Right ventricle myocardium inferior (tissue), 1 donor: ENCODE measurements at regions of chr1 and their contacts with region 1.

Region 1: GRCh38 chr1:87328272-87329050 is at the start of gene LMO4:
- DNase-seq: peak; percentile 97
- ATAC-seq: peak; percentile 91
- total RNA-seq, gene LMO4: 44.3 TPM

Region 2: DNA sequence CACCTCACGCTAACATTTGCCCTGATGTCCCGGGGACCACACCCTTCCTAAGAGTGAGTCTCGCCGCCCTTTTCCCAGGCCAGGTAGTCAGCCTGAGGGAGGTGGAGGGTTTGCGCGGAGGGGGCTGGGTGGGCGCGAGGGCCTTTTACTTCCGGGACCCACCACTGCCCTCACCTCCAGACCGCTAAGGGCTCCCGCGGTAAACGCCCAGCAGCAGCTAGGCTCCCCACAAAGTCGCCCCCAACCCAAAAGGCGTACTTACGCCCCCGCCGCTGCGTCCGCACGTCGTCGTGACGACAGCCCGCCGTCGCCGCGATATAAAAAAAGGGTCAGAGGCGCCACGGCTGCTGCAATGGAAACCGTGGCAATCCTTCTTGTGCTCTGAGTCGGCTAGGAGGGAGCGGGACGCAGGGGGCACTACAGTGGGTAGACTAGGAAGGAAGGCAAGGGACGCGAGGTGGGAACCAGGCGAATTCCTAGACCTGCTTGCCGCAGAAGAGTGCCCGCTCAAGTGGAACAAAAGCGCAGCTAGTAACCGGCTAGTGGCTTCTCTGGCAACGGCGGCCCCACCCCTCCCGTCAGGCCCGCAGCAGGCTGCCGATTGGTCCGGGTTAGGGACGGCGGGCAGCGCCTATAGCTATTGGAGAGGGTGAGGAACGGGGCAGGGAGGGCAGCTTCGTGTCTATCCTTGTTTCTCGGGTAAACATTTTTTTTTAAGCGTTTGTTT is 932.5 kb before region 1 on chr1 and contains the start of gene ODF2L:
- intact Hi-C with region 1: loop called (anchors 10 kb)
- DNase-seq: peak; percentile 96
- ATAC-seq: peak; percentile 100
- total RNA-seq, gene ODF2L: 5.1 TPM

Region 3: DNA sequence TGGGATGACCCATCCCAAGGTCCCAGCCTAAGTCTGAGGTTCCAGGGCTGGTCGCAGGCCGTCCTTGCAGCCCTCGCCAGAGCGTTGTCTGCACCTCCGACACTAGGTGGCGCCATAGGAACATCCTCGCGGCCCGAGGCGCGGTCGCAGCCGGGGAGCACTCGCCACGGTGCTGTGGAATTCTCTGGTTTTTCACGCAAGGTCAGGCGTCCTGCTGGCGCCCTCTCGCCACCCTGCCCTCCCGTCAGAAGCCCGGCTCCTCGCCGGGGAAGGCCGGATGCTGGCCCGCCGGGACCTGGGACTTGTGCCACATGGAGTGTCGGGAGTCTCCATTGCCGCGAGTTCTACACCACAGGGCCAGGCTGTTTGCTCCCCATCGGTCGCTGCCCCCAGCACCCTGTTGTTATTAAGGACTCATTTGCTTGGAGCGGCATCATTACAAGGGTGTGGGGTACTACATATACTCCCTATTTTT is 196.6 kb before region 1 on chr1:
- intact Hi-C with region 1: loop called (anchors 5 kb)
- DNase-seq: peak; percentile 88
- ATAC-seq: peak; percentile 90

Region 4: DNA sequence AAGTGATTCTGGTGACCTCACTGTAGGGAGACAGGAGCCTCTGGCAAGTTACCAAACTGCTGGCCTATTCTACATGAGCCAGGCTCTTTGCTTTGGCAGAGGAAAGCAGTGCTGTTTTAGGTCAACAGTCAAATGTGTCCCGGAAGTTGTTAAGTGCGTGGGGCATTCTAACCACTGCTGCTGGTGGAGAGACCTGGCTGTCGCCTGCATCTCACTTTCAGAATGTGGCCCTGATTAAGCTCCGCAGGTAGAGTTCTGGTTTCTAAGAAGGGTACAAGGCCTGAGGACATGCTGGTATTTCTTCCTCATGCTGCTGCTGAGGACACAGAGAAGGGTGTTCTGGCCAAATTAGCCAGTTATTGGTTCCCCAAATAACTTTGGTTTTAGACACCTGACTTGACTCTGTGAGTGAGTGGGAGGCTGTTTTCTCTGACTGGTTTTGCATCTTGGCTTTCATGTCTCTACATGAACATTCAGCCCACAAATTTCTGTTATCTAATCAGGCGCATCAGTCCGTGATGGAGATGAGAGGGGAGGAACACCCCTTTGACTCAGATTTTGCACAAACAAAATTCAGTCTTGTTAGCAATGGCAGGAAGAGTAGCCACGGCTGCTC is 121.0 kb after region 1 on chr1:
- intact Hi-C with region 1: loop called (anchors 5 kb)
- DNase-seq: no peak
- ATAC-seq: peak; percentile 93

Region 5: GRCh38 chr1:87684194-87684593 is 355.7 kb after region 1 on chr1:
- intact Hi-C with region 1: loop called (anchors 5 kb)
- DNase-seq: no peak
- ATAC-seq: peak; percentile 59

Region 6: DNA sequence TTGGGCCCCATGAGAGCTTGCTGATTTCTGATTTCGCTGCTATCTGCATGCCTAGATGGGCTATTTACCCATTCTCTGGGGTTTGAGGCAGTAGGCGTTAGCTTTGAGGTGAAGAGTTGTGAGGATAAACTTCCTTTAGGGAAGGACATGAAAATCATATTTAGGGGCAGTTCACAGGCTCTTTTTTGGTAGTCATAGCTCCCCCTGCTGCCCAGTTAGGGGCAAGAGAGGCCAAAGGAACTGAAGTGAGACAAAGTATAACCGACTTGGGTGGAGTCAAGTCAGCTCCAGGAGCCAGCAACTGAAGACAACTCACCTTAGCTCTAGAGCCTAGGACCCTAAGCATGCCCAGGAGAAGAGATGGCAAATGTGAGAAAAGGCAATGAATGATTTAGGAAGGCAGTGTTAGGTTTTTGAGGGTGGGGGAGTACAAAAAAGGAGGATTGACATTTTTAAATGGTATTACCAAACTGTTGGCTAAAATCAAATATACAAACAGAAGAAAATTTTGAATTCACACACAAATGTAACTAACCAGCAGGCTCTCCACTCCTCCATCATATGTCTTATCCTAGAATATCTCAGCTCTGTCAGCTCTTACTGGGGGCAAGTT is 625.4 kb after region 1 on chr1:
- intact Hi-C with region 1: loop called (anchors 1 kb)
- DNase-seq: no peak
- ATAC-seq: peak; percentile 76

Region 7: GRCh38 chr1:88061492-88062177 is 733.2 kb after region 1 on chr1:
- intact Hi-C with region 1: loop called (anchors 5 kb)
- DNase-seq: no peak
- ATAC-seq: peak; percentile 73